ENCODE measurements at regions of chr17 and their contacts with region 1.

Region 1: DNA sequence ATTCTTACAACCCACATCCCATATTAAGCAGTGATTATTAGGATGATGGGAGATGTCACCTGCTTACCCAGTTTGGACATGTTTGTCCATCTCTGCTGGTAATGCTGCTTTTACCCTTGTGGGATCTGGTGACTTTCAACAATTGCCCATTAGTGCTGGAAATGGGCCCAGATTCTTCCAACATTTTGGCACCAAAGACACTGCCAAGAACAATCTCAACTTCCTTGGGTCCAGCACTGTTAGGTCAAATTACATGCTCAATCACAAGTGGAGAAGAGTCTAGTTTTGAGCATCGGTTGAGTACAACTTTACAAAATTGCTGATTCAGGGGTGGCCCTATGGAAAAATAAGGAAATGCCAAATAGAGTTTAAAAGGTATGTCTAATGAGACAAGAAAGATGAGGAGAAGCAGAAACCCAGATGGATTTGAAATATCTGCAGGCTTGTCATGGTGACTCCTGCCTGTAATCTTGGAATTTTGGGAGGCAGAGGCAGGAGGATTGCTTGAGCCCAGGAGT is 13.0 kb upstream of the ZFP3 start:
- DNase-seq: no peak
- H3K4me3 ChIP-seq: no peak overlapping the region
- H3K27ac ChIP-seq: no peak overlapping the region
- H3K4me1 ChIP-seq: no peaks in the 10 kb centered on the region
- H3K27me3 ChIP-seq: no peaks in the 10 kb centered on the region
- CTCF ChIP-seq: no peak

Region 2: GRCh38 chr17:4908301-4908700 is 157.0 kb before region 1 on chr17:
- intact Hi-C with region 1: loop called (anchors 1 kb)
- DNase-seq: no peak
- H3K4me3 ChIP-seq: no peak overlapping the region
- H3K27ac ChIP-seq: peak overlapping the region in 1 of 2 donors; percentile 49
- H3K4me1 ChIP-seq: peaks cover 0 to 8% of the 10 kb centered on the region in 2 donors
- H3K27me3 ChIP-seq: no peaks in the 10 kb centered on the region
- CTCF ChIP-seq: no peak

Region 3: GRCh38 chr17:4980644-4981216 is 84.6 kb before region 1 on chr17:
- intact Hi-C with region 1: loop called (anchors 1 kb)
- DNase-seq: no peak
- H3K4me3 ChIP-seq: no peak overlapping the region
- H3K27ac ChIP-seq: no peak overlapping the region
- H3K4me1 ChIP-seq: no peaks in the 10 kb centered on the region
- H3K27me3 ChIP-seq: no peaks in the 10 kb centered on the region
- CTCF ChIP-seq: peak; percentile 68 to 76 (median 76)

Measured in ascending aorta (tissue), 2 donors.